ENCODE measurements at regions of chr1 and their contacts with region 1.

Region 1: DNA sequence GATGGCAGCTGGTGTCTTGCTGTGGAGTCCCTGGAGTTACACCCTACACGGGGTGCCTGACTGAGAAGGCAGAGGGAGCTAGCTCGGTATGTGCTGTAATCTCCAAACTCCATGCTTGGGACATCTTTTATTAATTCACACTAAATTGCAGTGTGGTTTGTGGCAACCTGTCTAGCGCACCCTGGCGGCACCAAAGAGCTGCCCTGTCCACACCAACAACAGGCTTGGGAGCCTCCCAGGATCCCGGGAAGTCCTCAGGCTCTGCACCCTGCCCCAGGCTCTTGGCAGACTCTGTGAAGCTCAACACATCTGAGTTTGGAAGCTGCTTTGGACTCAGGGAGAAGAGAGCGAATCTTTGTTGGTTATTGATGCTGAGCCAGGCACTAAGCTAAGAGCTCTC is 138.9 kb downstream of the IGSF21 start:
- DNase-seq: no peak
- ATAC-seq: peak; percentile 64; the same call in 1 of the 2 replicates
- H3K4me3 ChIP-seq: no peak overlapping the region
- H3K27ac ChIP-seq: no peak overlapping the region
- H3K4me1 ChIP-seq: no peaks in the 10 kb centered on the region
- H3K27me3 ChIP-seq: peaks cover 78% of the 10 kb centered on the region
- CTCF ChIP-seq: peak; percentile 13 to 56 (median 50); a peak in 5 of 6 replicates
- POLR2A ChIP-seq: no peak
- RAD21 ChIP-seq: no peak

Region 2: DNA sequence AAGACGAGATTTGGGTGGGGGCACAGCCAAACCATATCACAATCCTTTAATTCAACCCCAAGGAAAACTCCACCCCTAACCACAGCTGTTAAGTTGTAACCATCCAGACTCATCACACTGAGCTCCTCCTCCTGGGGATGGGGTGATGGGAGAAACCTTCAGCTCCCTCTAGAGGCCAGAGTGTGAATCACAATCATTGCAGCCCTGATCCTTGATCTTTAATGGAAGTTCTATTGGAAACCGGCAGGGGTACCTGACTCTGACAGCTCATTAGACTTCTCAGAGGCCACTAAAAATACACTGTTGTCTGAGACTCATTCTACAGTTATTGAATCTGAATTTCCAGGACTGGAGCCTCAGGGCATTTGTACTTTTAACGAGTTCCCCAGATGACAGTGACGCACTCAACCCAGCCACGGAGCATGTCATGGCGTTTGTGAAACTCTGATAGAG is 11.7 kb before region 1 on chr1:
- CTCF ChIA-PET with region 1: interaction called, 25 read pairs
- POLR2A ChIA-PET with region 1: interaction called, 3 read pairs
- RAD21 ChIA-PET with region 1: no interaction called
- intact Hi-C with region 1: no loop called
- DNase-seq: peak; percentile 73
- ATAC-seq: peak; percentile 99
- H3K4me3 ChIP-seq: no peak overlapping the region
- H3K27ac ChIP-seq: no peak overlapping the region
- H3K4me1 ChIP-seq: no peaks in the 10 kb centered on the region
- H3K27me3 ChIP-seq: peaks cover 36% of the 10 kb centered on the region
- CTCF ChIP-seq: peak; percentile 61 to 92 (median 90)
- POLR2A ChIP-seq: no peak
- RAD21 ChIP-seq: peak; percentile 50

Measured in HCT116 (cell line).